ENCODE measurements at regions of chr3 and their contacts with region 1.

Region 1: DNA sequence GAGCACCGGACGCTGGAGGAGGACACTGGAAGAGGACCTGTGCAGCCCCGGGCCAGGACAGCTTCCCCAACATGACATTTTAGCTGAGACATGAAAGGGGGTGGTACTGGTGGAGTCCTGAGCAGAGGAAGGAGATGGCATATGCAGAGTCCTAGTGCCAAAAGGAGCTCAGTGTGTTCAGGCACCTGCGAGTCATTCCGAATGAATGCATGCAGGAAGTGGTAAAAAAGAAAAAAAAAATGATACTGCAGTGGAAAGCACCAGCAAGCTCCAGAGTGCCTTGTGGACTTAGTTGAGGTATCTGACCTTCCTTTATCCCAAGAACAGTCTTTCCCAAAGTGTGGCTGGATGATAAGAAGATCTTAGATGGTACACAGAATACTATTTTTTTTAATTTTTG is 6.6 kb upstream of the ZNF148 start:
- DNase-seq: peak; percentile 27 to 75
- H3K4me3 ChIP-seq: no peak overlapping the region
- H3K27ac ChIP-seq: no peak overlapping the region; the same call in 1 of the 2 replicates
- H3K4me1 ChIP-seq: peaks cover 16% of the 10 kb centered on the region
- H3K27me3 ChIP-seq: no peaks in the 10 kb centered on the region
- CTCF ChIP-seq: no peak

Region 2: GRCh38 chr3:125141596-125142419 is 239.9 kb before region 1 on chr3:
- CTCF ChIA-PET with region 1: no interaction called
- POLR2A ChIA-PET with region 1: no interaction called
- intact Hi-C with region 1: no loop called
- DNase-seq: no peak
- H3K4me3 ChIP-seq: no peak overlapping the region
- H3K27ac ChIP-seq: no peak overlapping the region
- H3K4me1 ChIP-seq: peaks cover 12% of the 10 kb centered on the region
- H3K27me3 ChIP-seq: no peaks in the 10 kb centered on the region
- CTCF ChIP-seq: no peak

Region 3: DNA sequence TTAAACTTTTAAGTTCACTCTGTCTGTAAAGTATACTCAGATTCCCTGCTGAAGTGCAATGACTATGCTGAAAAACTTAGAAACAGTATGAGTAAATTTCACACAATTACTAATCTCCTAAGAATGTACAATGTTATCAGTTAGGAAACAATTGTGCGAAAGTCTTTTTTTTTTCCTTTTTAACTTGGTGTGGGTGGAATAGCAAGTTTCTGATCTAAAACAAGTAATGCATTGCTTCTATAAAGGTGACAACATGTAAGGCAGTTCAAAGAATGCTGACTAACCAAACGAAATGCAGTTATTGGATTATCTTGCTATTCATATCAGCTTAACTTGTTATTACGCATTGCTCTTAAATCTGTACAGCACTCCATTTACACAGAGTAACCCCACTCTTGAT is 149.8 kb before region 1 on chr3:
- CTCF ChIA-PET with region 1: no interaction called
- POLR2A ChIA-PET with region 1: interaction called, 18 read pairs
- intact Hi-C with region 1: no loop called
- DNase-seq: peak in 1 of 2 experiments; percentile 88
- H3K4me3 ChIP-seq: no peak overlapping the region
- H3K27ac ChIP-seq: peak overlapping the region; percentile 95
- H3K4me1 ChIP-seq: peaks cover 21% of the 10 kb centered on the region
- H3K27me3 ChIP-seq: no peaks in the 10 kb centered on the region
- CTCF ChIP-seq: no peak

Region 4: GRCh38 chr3:125367403-125368230 is 14.1 kb before region 1 on chr3:
- CTCF ChIA-PET with region 1: no interaction called
- POLR2A ChIA-PET with region 1: interaction called, 11 read pairs
- intact Hi-C with region 1: no loop called
- DNase-seq: no peak
- H3K4me3 ChIP-seq: no peak overlapping the region
- H3K27ac ChIP-seq: no peak overlapping the region
- H3K4me1 ChIP-seq: no peaks in the 10 kb centered on the region
- H3K27me3 ChIP-seq: no peaks in the 10 kb centered on the region
- CTCF ChIP-seq: no peak

Region 5: DNA sequence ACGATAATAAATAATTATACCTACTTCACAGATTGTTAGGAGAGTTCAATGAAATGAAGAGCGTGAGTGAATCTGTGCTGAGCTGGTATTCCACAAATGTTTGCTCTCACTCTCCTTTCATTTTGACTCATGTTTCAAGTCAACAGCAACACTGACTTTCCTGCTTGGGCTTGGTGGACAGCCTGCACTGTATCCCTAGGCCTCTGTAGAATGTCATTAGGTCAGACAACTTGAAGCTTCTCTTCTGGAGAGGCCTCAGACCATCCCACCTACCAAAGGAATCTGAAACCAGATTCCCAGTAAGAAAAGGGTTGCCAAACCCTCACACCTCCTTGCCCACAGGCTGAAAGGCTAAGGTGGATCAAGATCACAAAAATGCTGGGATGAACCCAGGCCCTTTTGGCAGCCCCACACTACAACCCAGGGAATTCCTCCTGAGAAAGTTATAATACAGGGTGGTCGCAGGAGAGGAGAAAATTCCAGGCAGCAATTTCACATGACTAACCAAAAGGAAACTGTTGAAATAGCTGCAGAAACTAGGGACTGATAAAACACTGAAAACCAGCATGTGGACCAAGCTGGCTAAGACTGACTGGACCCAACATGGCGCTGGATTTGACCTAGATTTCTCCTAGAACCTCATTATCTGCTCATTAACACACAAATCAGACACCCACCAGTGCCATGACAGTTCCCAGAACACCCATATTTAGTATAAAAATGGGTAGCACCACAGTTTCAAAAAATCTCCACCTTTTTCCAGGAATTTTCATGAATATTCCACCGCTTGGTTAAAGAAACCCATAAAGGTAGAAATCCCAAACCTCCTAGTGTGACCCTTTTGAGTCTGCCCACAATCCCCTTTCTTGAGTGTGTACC is 50.4 kb after region 1 on chr3:
- CTCF ChIA-PET with region 1: interaction called, 10 read pairs
- POLR2A ChIA-PET with region 1: no interaction called
- intact Hi-C with region 1: loop called (anchors 5 kb)
- DNase-seq: no peak
- H3K4me3 ChIP-seq: no peak overlapping the region
- H3K27ac ChIP-seq: no peak overlapping the region
- H3K4me1 ChIP-seq: peaks cover 8% of the 10 kb centered on the region
- H3K27me3 ChIP-seq: no peaks in the 10 kb centered on the region
- CTCF ChIP-seq: no peak

Measured in PC-9 (cell line).